ENCODE measurements at regions of chr1 and their contacts with region 1.

Region 1: GRCh38 chr1:155277070-155277895 is at the start of gene HCN3:
- DNase-seq: peak; percentile 95
- ATAC-seq: peak; percentile 75
- H3K4me3 ChIP-seq: peak within 1 kb of the TSS; percentile 49 to 64 (median 59)
- H3K4me3 Mint-ChIP-seq: peak within 1 kb of the TSS; percentile 83
- H3K27ac ChIP-seq: peak within 1 kb of the TSS in 1 of 2 donors; percentile 33
- H3K27ac Mint-ChIP-seq: peak within 1 kb of the TSS; percentile 41
- H3K4me1 ChIP-seq: peaks cover 25 to 36% of the 10 kb centered on the region in 2 donors
- H3K4me1 Mint-ChIP-seq: peaks cover 35% of the 10 kb centered on the region
- H3K27me3 ChIP-seq: no peaks in the 10 kb centered on the region
- H3K27me3 Mint-ChIP-seq: no peaks in the 10 kb centered on the region
- CTCF ChIP-seq: peak; percentile 76
- total RNA-seq, gene HCN3: 9.0 and 9.2 TPM in 2 replicates

Region 2: GRCh38 chr1:155244368-155245162 is 32.7 kb before region 1 on chr1:
- CTCF ChIA-PET with region 1: interaction called, 5 read pairs
- POLR2A ChIA-PET with region 1: no interaction called
- intact Hi-C with region 1: loop called (anchors 5 kb)
- DNase-seq: peak; percentile 95
- ATAC-seq: peak; percentile 97
- H3K4me3 ChIP-seq: peak overlapping the region; percentile 60 to 79 (median 67)
- H3K4me3 Mint-ChIP-seq: peak overlapping the region; percentile 82
- H3K27ac ChIP-seq: peak overlapping the region; percentile 62 to 71
- H3K27ac Mint-ChIP-seq: peak overlapping the region; percentile 96
- H3K4me1 ChIP-seq: peaks cover 27 to 36% of the 10 kb centered on the region in 2 donors
- H3K4me1 Mint-ChIP-seq: peaks cover 33% of the 10 kb centered on the region
- H3K27me3 ChIP-seq: no peaks in the 10 kb centered on the region
- H3K27me3 Mint-ChIP-seq: peaks cover 4% of the 10 kb centered on the region
- CTCF ChIP-seq: peak; percentile 45

Region 3: GRCh38 chr1:155308493-155309422 is 31.5 kb after region 1 on chr1 and contains the start of gene FDPS:
- CTCF ChIA-PET with region 1: interaction called, 6 read pairs
- POLR2A ChIA-PET with region 1: interaction called, 3 read pairs
- intact Hi-C with region 1: loop called (anchors 1 kb)
- DNase-seq: peak; percentile 99
- ATAC-seq: peak; percentile 99
- H3K4me3 ChIP-seq: peak within 1 kb of the TSS; percentile 62 to 100 (median 88)
- H3K4me3 Mint-ChIP-seq: peak within 1 kb of the TSS; percentile 93
- H3K27ac ChIP-seq: peak within 1 kb of the TSS; percentile 91 to 94
- H3K27ac Mint-ChIP-seq: peak within 1 kb of the TSS; percentile 93
- H3K4me1 ChIP-seq: peaks cover 10 to 23% of the 10 kb centered on the region in 2 donors
- H3K4me1 Mint-ChIP-seq: peaks cover 27% of the 10 kb centered on the region
- H3K27me3 ChIP-seq: no peaks in the 10 kb centered on the region
- H3K27me3 Mint-ChIP-seq: no peaks in the 10 kb centered on the region
- CTCF ChIP-seq: no peak
- total RNA-seq, gene FDPS: 128 and 141 TPM in 2 replicates

Measured in B cell (primary cell).